ENCODE measurements at regions of chrX and their contacts with region 1.

Region 1: DNA sequence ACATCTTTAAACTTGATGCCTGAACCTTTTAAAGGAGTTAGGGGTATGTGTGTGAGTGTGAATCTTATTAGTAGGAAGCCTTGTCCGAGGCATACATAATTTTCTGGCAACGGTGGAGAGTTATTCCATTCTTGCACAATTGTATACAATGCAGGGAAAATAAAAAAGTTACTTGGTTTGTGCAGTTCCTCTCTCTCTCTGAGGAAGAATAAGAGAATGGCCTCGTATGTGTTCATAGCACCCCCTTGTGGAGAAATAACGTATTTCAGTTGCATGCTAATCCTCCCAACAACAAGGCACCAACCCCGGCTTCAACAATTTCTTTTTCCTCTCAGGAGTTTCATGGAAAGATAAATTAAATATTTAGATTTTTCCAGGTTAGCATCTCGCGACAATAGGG is 33.7 kb upstream of the FGF13 start:
- DNase-seq: peak in 5 of 9 donors; percentile 9 to 44 (median 41)
- ATAC-seq: peak; percentile 40
- H3K4me3 ChIP-seq: no peak overlapping the region
- H3K4me3 Mint-ChIP-seq: no peak overlapping the region
- H3K27ac ChIP-seq: no peak overlapping the region
- H3K27ac Mint-ChIP-seq: no peak overlapping the region
- H3K4me1 ChIP-seq: no peaks in the 10 kb centered on the region
- H3K4me1 Mint-ChIP-seq: peaks cover 0 to 3% (median 0%) of the 10 kb centered on the region in 7 donors
- H3K27me3 ChIP-seq: no peaks in the 10 kb centered on the region
- H3K27me3 Mint-ChIP-seq: peaks cover 0 to 5% (median 0%) of the 10 kb centered on the region in 5 donors

Region 2: GRCh38 chrX:138128027-138128671 is 617.0 kb before region 1 on chrX:
- CTCF ChIA-PET with region 1: no interaction called
- POLR2A ChIA-PET with region 1: no interaction called
- intact Hi-C with region 1: loop called in 1 of 2 experiments (anchors 2 kb)
- DNase-seq: peak in 6 of 9 donors; percentile 0 to 31 (median 22)
- ATAC-seq: peak; percentile 36
- H3K4me3 ChIP-seq: no peak overlapping the region
- H3K4me3 Mint-ChIP-seq: no peak overlapping the region
- H3K27ac ChIP-seq: no peak overlapping the region
- H3K27ac Mint-ChIP-seq: no peak overlapping the region
- H3K4me1 ChIP-seq: no peaks in the 10 kb centered on the region
- H3K4me1 Mint-ChIP-seq: no peaks in the 10 kb centered on the region
- H3K27me3 ChIP-seq: no peaks in the 10 kb centered on the region
- H3K27me3 Mint-ChIP-seq: no peaks in the 10 kb centered on the region

Region 3: DNA sequence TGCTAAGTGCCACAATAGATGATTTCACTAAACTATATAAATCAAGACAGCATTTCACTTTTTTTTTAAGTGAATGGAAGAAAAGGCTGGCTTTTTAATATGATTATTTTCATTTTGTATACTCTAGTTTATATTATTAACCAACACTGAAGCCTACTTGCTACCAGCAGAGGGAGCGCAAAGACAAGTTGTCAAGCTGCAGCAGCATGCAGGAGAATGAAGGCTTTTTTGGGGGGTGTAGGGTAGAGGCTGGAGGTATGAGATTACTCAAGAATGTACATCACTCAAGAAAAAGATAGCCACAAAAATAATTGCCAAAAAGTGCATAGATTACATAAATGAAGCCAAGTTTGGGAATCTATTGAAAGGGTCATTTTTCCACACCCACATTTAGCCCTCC is 553.2 kb before region 1 on chrX:
- CTCF ChIA-PET with region 1: no interaction called
- POLR2A ChIA-PET with region 1: no interaction called
- intact Hi-C with region 1: loop called in 1 of 2 experiments (anchors 5 kb)
- DNase-seq: no peak
- ATAC-seq: no peak
- H3K4me3 ChIP-seq: no peak overlapping the region
- H3K4me3 Mint-ChIP-seq: no peak overlapping the region
- H3K27ac ChIP-seq: no peak overlapping the region
- H3K27ac Mint-ChIP-seq: no peak overlapping the region
- H3K4me1 ChIP-seq: no peaks in the 10 kb centered on the region
- H3K4me1 Mint-ChIP-seq: no peaks in the 10 kb centered on the region
- H3K27me3 ChIP-seq: no peaks in the 10 kb centered on the region
- H3K27me3 Mint-ChIP-seq: no peaks in the 10 kb centered on the region

Region 4: DNA sequence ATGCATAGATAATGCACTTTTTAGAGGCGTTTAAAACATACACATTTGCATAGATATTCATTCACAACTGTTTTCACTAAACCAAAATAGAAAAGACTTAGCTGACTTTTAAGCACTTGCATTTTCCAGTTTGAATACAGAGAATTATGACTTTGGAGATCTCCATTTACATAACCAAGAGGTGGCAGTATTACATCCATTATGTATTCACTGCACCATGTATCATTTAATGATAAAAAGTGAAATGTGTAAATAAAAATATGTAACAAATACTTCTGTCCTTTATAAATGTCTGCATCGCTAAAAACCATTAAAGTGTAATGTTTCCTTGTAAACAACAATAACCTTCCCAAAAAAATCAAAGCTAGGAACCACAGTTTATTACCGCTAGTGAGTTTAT is 446.9 kb before region 1 on chrX:
- CTCF ChIA-PET with region 1: no interaction called
- POLR2A ChIA-PET with region 1: no interaction called
- intact Hi-C with region 1: loop called in 1 of 2 experiments (anchors 10 kb)
- DNase-seq: no peak
- ATAC-seq: no peak
- H3K4me3 ChIP-seq: no peak overlapping the region
- H3K4me3 Mint-ChIP-seq: no peak overlapping the region
- H3K27ac ChIP-seq: no peak overlapping the region
- H3K27ac Mint-ChIP-seq: no peak overlapping the region
- H3K4me1 ChIP-seq: no peaks in the 10 kb centered on the region
- H3K4me1 Mint-ChIP-seq: no peaks in the 10 kb centered on the region
- H3K27me3 ChIP-seq: no peaks in the 10 kb centered on the region
- H3K27me3 Mint-ChIP-seq: no peaks in the 10 kb centered on the region

Region 5: GRCh38 chrX:139063364-139063763 is 318.2 kb after region 1 on chrX:
- CTCF ChIA-PET with region 1: no interaction called
- POLR2A ChIA-PET with region 1: no interaction called
- intact Hi-C with region 1: no loop called
- DNase-seq: no peak
- ATAC-seq: no peak
- H3K4me3 ChIP-seq: no peak overlapping the region
- H3K4me3 Mint-ChIP-seq: no peak overlapping the region
- H3K27ac ChIP-seq: no peak overlapping the region
- H3K27ac Mint-ChIP-seq: no peak overlapping the region
- H3K4me1 ChIP-seq: no peaks in the 10 kb centered on the region
- H3K4me1 Mint-ChIP-seq: no peaks in the 10 kb centered on the region
- H3K27me3 ChIP-seq: no peaks in the 10 kb centered on the region
- H3K27me3 Mint-ChIP-seq: peaks cover 0 to 6% (median 5%) of the 10 kb centered on the region in 5 donors